Tibial artery (tissue), 4 donors: ENCODE measurements at regions of chr2 and their contacts with region 1.

Region 1: GRCh38 chr2:32772638-32773447 is 145.0 kb downstream of the TTC27 start:
- DNase-seq: no peak
- H3K4me3 ChIP-seq: no peak overlapping the region
- H3K27ac ChIP-seq: no peak overlapping the region
- H3K4me1 ChIP-seq: peaks cover 0 to 6% (median 0%) of the 10 kb centered on the region in 4 donors
- H3K27me3 ChIP-seq: no peaks in the 10 kb centered on the region
- CTCF ChIP-seq: peak; percentile 62 to 81

Region 2: GRCh38 chr2:31725444-31725843 is 1047.4 kb before region 1 on chr2:
- intact Hi-C with region 1: no loop called
- DNase-seq: no peak
- H3K4me3 ChIP-seq: no peak overlapping the region
- H3K27ac ChIP-seq: no peak overlapping the region
- H3K4me1 ChIP-seq: no peaks in the 10 kb centered on the region
- H3K27me3 ChIP-seq: no peaks in the 10 kb centered on the region
- CTCF ChIP-seq: no peak

Region 3: GRCh38 chr2:33441235-33441810 is 668.5 kb after region 1 on chr2:
- intact Hi-C with region 1: loop called (anchors 10 kb)
- DNase-seq: peak; percentile 61 to 82
- H3K4me3 ChIP-seq: no peak overlapping the region
- H3K27ac ChIP-seq: peak overlapping the region; percentile 13 to 18
- H3K4me1 ChIP-seq: peaks cover 0 to 32% (median 9%) of the 10 kb centered on the region in 4 donors
- H3K27me3 ChIP-seq: no peaks in the 10 kb centered on the region
- CTCF ChIP-seq: peak; percentile 64 to 76

Region 4: DNA sequence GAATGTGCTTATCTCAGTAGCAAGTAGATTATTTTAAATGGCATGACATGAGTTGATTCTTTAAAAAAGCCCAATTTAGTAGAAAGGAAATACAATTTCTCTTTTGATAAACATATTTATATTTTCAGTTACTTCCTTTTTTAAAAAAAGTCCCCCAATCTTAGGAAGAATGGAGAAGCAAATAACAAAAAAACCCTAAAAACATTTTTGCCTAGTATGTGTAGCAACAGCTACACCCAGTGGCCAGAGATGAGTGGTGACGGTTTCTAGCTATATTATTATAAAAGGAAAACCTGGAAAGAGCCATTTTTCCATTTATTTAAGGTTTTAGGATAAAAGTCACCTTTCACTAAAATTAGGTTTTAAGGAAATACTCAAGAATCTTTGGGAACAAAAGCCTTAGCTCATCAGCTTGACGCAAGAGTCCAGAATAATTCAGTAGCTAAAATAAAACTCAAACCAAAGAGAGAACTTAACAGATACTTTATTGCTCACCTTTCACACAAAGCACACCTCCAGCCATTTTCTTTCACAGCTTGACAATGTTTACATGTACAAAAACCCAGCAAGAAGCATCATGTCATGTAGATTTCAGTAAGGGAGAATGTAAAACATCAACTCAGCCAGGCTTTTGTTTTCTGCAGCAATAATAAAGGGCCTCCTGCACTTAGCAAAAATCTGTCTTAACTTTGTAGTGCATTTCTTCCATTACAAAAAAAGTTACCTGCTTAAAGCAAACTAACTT is 810.5 kb after region 1 on chr2:
- intact Hi-C with region 1: loop called (anchors 10 kb)
- DNase-seq: peak in 1 of 2 donors; percentile 42
- H3K4me3 ChIP-seq: no peak overlapping the region
- H3K27ac ChIP-seq: no peak overlapping the region
- H3K4me1 ChIP-seq: peaks cover 0 to 25% (median 1%) of the 10 kb centered on the region in 4 donors
- H3K27me3 ChIP-seq: no peaks in the 10 kb centered on the region
- CTCF ChIP-seq: peak; percentile 76 to 81